ENCODE measurements at regions of chr1 and their contacts with region 1.

Region 1: GRCh38 chr1:24003331-24003972 is 23.3 kb upstream of the SRSF10 start:
- DNase-seq: no peak
- H3K4me3 ChIP-seq: no peak overlapping the region
- H3K27ac ChIP-seq: no peak overlapping the region
- H3K4me1 ChIP-seq: no peaks in the 10 kb centered on the region
- H3K27me3 ChIP-seq: no peaks in the 10 kb centered on the region
- CTCF ChIP-seq: no peak
- POLR2A ChIP-seq: no peak

Region 2: DNA sequence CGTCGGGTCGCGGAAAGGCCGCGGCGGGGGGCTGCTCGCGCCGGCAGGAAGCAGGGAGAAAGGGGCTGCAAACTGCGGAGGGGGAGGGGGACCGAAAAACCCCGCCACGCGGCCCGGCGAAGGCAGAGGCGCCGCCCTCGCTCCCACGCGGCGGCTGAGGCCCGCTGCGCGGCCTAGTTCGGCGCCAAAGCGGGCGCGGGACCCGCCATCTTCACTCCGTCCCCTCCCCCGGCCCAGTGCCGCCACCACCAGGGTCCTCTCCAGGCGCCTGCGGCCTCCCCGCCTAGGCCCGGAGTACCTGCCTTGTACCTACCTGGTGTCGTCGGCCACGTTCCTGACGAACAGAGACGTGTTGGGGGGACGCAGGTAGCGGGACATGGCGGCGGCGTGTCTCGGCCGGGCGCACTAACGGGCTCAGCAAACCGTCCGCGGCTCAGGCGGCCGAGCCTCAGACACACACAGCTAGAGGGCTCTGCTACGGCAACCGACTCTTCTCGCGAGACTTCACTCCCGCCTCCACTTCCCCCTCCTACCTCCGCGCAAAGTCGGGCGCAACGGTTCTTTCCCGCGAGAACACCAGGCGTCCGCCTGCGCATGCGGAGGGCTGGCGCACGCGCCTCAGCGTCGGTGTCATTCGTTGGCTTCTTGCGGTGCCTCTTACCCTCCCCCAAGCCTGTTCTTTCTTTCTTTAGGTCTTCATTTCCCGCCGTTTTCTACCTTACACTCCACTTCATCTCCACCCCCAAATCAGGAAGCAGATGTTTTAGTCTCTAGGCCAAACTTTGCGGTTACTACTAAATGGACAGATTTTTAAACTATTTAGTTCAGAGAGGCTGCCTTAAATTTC is 23.4 kb before region 1 on chr1 and contains the start of gene SRSF10:
- intact Hi-C with region 1: loop called (anchors 1 kb)
- DNase-seq: peak; percentile 97 to 98
- H3K4me3 ChIP-seq: peak within 1 kb of the TSS; percentile 84 to 99 (median 94)
- H3K27ac ChIP-seq: peak within 1 kb of the TSS; percentile 98 to 99
- H3K4me1 ChIP-seq: peaks cover 0 to 31% of the 10 kb centered on the region in 2 donors
- H3K27me3 ChIP-seq: no peaks in the 10 kb centered on the region
- CTCF ChIP-seq: peak in 2 of 3 donors; percentile 39 to 43
- POLR2A ChIP-seq: peak; percentile 98
- total RNA-seq, gene SRSF10: 99.4 to 156 (median 116) TPM